HepG2 (cell line): ENCODE measurements at regions of chr11 and their contacts with region 1.

Region 1: DNA sequence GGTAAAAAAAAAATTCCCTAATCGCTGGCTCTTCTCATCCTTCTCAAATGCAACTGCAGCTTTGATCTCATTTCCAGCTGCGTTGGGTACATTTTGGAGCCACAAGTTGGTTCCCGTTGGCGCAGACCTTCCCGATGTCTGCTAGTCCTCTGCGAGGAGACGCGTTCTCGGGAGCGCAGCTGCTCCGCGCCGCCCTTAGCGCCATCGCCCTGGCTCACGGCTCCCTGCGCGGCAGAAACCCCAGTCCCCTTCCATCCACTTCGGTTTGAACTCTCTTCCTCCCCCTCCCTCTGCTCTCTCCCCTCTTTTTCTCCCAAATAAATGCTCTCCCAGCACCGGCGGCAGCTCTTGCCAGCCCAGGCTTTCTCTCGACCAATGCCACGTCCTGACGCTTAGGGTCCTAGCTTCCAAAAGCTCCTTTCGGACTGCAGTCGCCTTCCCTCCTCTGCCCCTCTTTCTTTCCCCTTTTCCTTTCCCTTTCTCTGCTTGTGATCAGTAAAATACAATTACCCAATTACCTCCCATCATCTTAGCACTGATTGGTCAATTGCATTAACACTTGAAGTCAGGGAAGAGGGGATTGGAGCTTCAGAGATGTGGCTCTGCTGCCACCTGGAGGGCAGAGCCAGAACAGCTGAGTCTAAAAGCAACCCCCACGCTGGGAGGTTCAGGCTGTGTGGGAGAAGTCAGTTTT is 1165.7 kb downstream of the LRRC4C start:
- DNase-seq: peak; percentile 61
- ATAC-seq: peak; percentile 99
- H3K4me3 ChIP-seq: peak overlapping the region in 2 of 3 experiments; percentile 18 to 46; a peak in 3 of 6 replicates
- H3K27ac ChIP-seq: no peak overlapping the region
- H3K4me1 ChIP-seq: peaks cover 7% of the 10 kb centered on the region; the same call in 1 of the 2 replicates
- H3K27me3 ChIP-seq: peaks cover 0 to 3% of the 10 kb centered on the region in 2 experiments; a peak in 1 of 5 replicates
- CTCF ChIP-seq: peak; percentile 89
- EP300 ChIP-seq: no peak
- POLR2A ChIP-seq: no peak
- RAD21 ChIP-seq: peak; percentile 76

Region 2: GRCh38 chr11:40130427-40130826 is 163.4 kb before region 1 on chr11:
- CTCF ChIA-PET with region 1: no interaction called
- POLR2A ChIA-PET with region 1: no interaction called
- in situ Hi-C with region 1: no loop called
- intact Hi-C with region 1: loop called (anchors 2 kb)
- DNase-seq: no peak
- ATAC-seq: no peak
- H3K4me3 ChIP-seq: no peak overlapping the region
- H3K27ac ChIP-seq: no peak overlapping the region
- H3K4me1 ChIP-seq: no peaks in the 10 kb centered on the region
- H3K27me3 ChIP-seq: no peaks in the 10 kb centered on the region
- CTCF ChIP-seq: peak; percentile 12; the same call in 1 of the 2 replicates
- EP300 ChIP-seq: no peak
- POLR2A ChIP-seq: no peak
- RAD21 ChIP-seq: no peak

Region 3: DNA sequence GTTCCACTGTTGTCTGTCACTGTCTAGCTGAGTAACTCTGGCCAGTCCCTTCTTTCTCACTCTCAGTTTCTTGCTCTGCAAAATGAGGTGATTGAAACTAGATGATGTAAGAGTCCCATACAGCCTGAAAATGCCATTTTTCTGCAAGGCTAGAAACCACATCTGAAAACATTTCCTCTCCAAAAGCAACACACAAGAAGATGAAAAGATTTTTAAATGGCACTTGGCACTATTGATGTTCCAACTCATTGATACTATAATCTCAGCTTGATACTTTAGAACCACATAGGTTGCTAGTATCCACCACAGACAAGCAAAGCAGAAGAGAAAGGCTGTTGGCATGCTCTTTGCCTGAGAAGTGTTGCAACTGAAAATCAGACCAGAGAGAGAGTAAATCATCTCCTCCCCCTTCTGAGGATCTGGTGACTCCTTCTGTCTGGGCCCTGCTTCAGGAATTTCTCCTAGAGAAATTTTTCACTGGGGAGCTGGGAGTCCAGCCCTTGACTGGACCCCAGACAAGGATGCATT is 52.2 kb before region 1 on chr11:
- CTCF ChIA-PET with region 1: no interaction called
- POLR2A ChIA-PET with region 1: no interaction called
- in situ Hi-C with region 1: no loop called
- intact Hi-C with region 1: no loop called
- DNase-seq: no peak
- ATAC-seq: no peak
- H3K4me3 ChIP-seq: no peak overlapping the region
- H3K27ac ChIP-seq: no peak overlapping the region
- H3K4me1 ChIP-seq: no peaks in the 10 kb centered on the region
- H3K27me3 ChIP-seq: no peaks in the 10 kb centered on the region
- CTCF ChIP-seq: no peak
- EP300 ChIP-seq: no peak
- POLR2A ChIP-seq: no peak
- RAD21 ChIP-seq: no peak

Region 4: DNA sequence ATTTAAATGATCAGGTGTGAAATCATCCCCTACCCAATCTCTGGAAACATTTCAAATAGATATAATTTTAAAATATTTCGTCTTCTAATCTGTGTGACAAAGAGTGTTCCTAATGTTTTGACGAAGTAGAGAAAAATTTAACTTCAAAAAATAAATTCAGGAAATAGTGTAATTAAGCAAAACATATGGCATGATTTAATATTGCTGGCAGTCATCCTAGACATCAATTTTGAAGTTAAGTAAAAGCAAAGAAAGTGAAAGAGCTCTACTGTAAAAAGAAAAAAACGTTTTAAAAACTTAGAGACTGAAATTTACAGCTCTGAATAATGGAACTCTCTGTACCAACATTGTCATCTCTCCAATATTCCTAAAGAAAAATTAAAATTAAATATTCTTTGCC is 103.3 kb after region 1 on chr11:
- CTCF ChIA-PET with region 1: no interaction called
- POLR2A ChIA-PET with region 1: no interaction called
- in situ Hi-C with region 1: no loop called
- intact Hi-C with region 1: no loop called
- DNase-seq: no peak
- ATAC-seq: no peak
- H3K4me3 ChIP-seq: no peak overlapping the region
- H3K27ac ChIP-seq: no peak overlapping the region
- H3K4me1 ChIP-seq: no peaks in the 10 kb centered on the region
- H3K27me3 ChIP-seq: no peaks in the 10 kb centered on the region
- CTCF ChIP-seq: no peak
- EP300 ChIP-seq: no peak
- POLR2A ChIP-seq: no peak
- RAD21 ChIP-seq: no peak